Activated CD4-positive, alpha-beta T cell treated with anti-CD3 and anti-CD28 coated beads for 36 hours (primary cell): ENCODE measurements at regions of chr19 and their contacts with region 1.

Region 1: GRCh38 chr19:2427429-2428320 is at the start of gene TIMM13:
- DNase-seq: peak; percentile 98
- ATAC-seq: peak; percentile 95
- H3K4me3 Mint-ChIP-seq: peak within 1 kb of the TSS; percentile 86
- H3K27ac Mint-ChIP-seq: peak within 1 kb of the TSS; percentile 96
- H3K4me1 Mint-ChIP-seq: peaks cover 5% of the 10 kb centered on the region
- H3K27me3 Mint-ChIP-seq: no peaks in the 10 kb centered on the region
- total RNA-seq, gene TIMM13: 70.7 to 104 TPM

Region 2: DNA sequence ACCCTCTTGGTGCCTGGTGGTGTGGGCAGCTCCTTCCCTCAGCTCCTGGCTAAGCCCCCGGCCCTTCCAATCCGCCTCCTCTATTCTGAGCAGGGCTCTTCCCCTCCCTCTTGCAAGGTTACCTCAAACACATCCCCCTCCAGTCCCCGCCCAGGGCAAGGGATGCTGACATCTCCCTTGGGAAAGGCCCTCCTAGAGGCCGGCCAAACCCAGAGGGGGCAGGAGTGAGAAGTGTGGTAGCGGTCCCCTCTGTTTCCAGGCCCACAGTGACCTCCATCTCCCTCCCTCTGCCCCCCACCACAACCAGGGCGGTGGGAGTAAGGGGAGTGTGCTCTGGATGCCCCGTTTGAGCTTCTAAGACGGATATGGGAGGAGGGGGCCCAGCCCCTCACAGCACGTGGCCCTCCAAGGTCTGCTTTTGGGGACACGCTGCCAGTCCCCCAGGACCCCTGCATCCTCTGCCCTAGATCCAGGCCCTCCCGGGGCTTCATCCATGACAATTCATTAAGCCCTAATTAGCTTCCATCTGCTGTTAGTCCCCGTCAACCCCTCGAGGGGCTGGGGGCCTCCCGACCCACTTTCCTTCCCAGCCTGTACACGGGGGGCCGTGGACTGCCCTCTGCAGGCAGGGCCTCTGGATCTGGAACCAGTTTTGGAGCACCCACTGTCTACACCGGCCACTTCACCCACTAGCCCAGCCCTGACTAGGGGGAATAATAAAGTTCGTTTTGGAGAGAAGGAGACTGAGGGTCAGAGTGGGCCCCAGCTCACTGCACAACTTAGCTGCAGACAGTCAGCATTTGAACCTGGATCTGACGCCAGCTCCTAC is 122.0 kb before region 1 on chr19:
- CTCF ChIA-PET with region 1: no interaction called
- POLR2A ChIA-PET with region 1: interaction called, 13 read pairs
- intact Hi-C with region 1: no loop called
- DNase-seq: no peak
- ATAC-seq: no peak
- H3K4me3 Mint-ChIP-seq: no peak overlapping the region
- H3K27ac Mint-ChIP-seq: no peak overlapping the region
- H3K4me1 Mint-ChIP-seq: peaks cover 10% of the 10 kb centered on the region
- H3K27me3 Mint-ChIP-seq: peaks cover 44% of the 10 kb centered on the region

Region 3: GRCh38 chr19:2328401-2329148 is 99.1 kb before region 1 on chr19 and contains the starts of genes LSM7 and SPPL2B:
- CTCF ChIA-PET with region 1: interaction called, 3 read pairs
- POLR2A ChIA-PET with region 1: no interaction called
- intact Hi-C with region 1: loop called in 1 of 2 experiments (anchors 1 kb)
- DNase-seq: peak; percentile 95
- ATAC-seq: peak; percentile 78
- H3K4me3 Mint-ChIP-seq: peak within 1 kb of the TSS; percentile 98
- H3K27ac Mint-ChIP-seq: peak within 1 kb of the TSS; percentile 99
- H3K4me1 Mint-ChIP-seq: peaks cover 69% of the 10 kb centered on the region
- H3K27me3 Mint-ChIP-seq: no peaks in the 10 kb centered on the region
- total RNA-seq, gene LSM7: 113 to 134 TPM
- total RNA-seq, gene SPPL2B: 37.7 to 48.5 TPM

Region 4: GRCh38 chr19:2455851-2456570 is 28.3 kb after region 1 on chr19:
- CTCF ChIA-PET with region 1: interaction called, 6 read pairs
- POLR2A ChIA-PET with region 1: interaction called, 5 read pairs
- intact Hi-C with region 1: loop called in 1 of 2 experiments (anchors 1 kb)
- DNase-seq: peak; percentile 73
- ATAC-seq: peak; percentile 47
- H3K4me3 Mint-ChIP-seq: peak overlapping the region; percentile 84
- H3K27ac Mint-ChIP-seq: peak overlapping the region; percentile 88
- H3K4me1 Mint-ChIP-seq: peaks cover 16% of the 10 kb centered on the region
- H3K27me3 Mint-ChIP-seq: no peaks in the 10 kb centered on the region

Region 5: DNA sequence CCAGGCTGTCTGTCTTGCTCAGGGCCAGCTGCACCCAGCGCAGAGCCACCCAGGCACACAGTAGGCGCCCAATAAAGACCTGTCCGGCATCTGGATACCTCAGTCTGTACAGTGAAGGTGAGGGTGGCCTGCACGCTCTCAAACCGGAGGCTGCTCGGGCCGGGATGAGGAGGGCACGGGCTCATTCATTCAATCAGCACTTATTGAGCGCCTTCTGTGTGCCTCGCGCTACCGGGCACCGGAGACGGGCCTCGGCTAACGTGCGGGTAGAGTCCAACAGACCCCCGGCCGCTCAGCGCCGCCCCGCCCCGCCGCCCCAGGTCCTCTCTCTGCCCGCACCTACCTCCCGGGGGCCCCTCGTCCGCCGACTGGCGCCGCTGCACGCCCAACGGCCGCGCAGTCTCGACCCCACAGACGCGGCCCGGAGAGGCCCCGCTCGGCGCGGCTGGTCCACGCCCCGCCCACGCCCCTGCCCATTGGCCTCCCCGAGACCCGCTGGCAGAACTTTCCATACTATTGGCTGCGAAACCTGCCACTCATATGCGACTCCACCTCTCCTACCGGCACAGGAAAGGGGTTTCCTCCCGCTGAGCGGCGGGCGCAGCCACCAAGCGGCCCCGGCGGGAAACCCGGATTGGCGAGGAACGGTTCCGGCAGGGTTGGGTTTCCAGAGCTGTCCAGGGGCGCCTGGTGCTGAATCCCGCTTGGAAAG is 312.1 kb after region 1 on chr19 and contains the start of gene SLC39A3:
- CTCF ChIA-PET with region 1: no interaction called
- POLR2A ChIA-PET with region 1: no interaction called
- intact Hi-C with region 1: loop called in 1 of 2 experiments (anchors 1 kb)
- DNase-seq: peak; percentile 99
- ATAC-seq: peak; percentile 100
- H3K4me3 Mint-ChIP-seq: peak within 1 kb of the TSS; percentile 95
- H3K27ac Mint-ChIP-seq: peak within 1 kb of the TSS; percentile 70
- H3K4me1 Mint-ChIP-seq: peaks cover 14% of the 10 kb centered on the region
- H3K27me3 Mint-ChIP-seq: peaks cover 8% of the 10 kb centered on the region
- total RNA-seq, gene SLC39A3: 26.6 to 46.0 TPM

Region 6: DNA sequence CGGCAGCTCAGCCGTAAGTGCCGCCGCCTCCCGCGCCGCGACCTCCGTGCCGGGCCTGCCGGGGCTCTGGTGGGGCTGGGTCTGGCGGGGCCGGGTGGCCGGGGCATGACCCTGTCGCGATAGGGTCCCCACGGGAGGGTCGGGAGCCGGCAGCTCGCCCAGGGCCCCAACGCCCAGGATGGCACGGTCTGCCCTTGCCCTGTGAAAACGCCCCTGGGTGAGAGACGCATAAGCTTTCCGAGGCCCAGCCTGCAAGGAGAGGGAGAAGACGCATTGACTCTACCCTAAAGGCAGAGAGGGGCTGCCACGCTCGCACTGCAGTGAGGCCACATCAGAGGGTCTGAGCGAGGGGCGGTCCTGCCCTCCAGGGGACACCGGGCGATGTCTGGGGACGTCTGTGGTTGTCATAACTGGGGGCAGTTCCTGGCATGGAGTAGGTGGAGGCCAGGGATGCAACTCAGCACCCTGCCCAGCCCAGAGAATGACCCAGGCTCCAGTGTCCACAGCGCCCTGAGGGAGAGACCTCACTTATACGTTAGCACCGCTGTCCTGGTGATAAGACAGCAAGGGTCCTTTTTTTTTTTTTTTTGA is 392.5 kb after region 1 on chr19:
- CTCF ChIA-PET with region 1: no interaction called
- POLR2A ChIA-PET with region 1: no interaction called
- intact Hi-C with region 1: loop called in 1 of 2 experiments (anchors 1 kb)
- DNase-seq: peak; percentile 31
- ATAC-seq: no peak
- H3K4me3 Mint-ChIP-seq: peak overlapping the region; percentile 78
- H3K27ac Mint-ChIP-seq: peak overlapping the region; percentile 31
- H3K4me1 Mint-ChIP-seq: peaks cover 12% of the 10 kb centered on the region
- H3K27me3 Mint-ChIP-seq: no peaks in the 10 kb centered on the region